ENCODE measurements at regions of chr11 and their contacts with region 1.

Region 1: GRCh38 chr11:102940714-102941588 is 14.6 kb downstream of the MMP13 start:
- DNase-seq: peak; percentile 29
- H3K4me3 ChIP-seq: no peak overlapping the region
- H3K27ac ChIP-seq: no peak overlapping the region
- H3K27me3 ChIP-seq: no peaks in the 10 kb centered on the region
- CTCF ChIP-seq: peak; percentile 78

Region 2: DNA sequence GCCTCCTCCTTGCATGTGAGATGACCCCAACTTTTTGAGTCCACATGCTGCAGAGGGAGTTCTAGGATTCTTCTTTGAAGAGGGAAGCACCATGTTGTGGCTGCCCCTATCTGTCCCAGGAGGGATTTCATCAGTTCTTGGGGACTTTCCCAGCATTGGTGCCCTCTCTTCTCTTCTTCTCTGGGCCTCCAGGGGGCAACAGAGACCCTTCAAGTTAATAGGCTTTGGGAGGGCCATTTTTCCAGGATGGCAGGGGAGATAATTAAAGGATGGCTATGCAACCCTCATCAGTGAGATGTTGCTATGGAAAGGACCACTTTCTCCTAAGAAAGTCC is 146.5 kb before region 1 on chr11:
- CTCF ChIA-PET with region 1: interaction called, 12 read pairs
- POLR2A ChIA-PET with region 1: no interaction called
- DNase-seq: no peak
- H3K4me3 ChIP-seq: no peak overlapping the region
- H3K27ac ChIP-seq: no peak overlapping the region
- H3K27me3 ChIP-seq: no peaks in the 10 kb centered on the region
- CTCF ChIP-seq: peak; percentile 58

Region 3: DNA sequence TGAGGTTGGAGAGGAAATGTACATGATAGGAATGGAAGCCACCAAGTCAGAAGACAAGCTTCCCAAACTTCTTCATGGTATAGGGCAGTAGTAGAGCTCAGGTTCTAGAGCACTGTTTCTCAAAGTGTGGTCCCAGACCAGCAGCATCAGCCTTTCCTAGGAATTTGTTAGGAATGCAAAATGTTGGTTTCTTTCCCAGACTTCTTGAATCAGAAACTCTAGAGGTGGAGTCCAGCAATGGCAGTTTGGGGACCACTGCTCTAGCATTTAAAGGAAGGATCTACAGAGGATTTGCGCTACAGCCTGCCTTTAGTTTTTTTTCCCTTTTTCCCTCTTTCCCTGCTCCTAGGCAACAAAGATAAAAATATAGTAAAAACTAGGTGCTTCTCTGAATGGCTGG is 49.2 kb before region 1 on chr11:
- CTCF ChIA-PET with region 1: interaction called, 10 read pairs
- POLR2A ChIA-PET with region 1: no interaction called
- DNase-seq: no peak
- H3K4me3 ChIP-seq: no peak overlapping the region
- H3K27ac ChIP-seq: no peak overlapping the region
- H3K27me3 ChIP-seq: peaks cover 7% of the 10 kb centered on the region
- CTCF ChIP-seq: 0 out of 2 replicates have a peak, but pooled peaks have one; percentile 4

Region 4: GRCh38 chr11:102920118-102920684 is 20.8 kb before region 1 on chr11:
- CTCF ChIA-PET with region 1: interaction called, 62 read pairs
- POLR2A ChIA-PET with region 1: no interaction called
- DNase-seq: no peak
- H3K4me3 ChIP-seq: no peak overlapping the region
- H3K27ac ChIP-seq: no peak overlapping the region
- H3K27me3 ChIP-seq: no peaks in the 10 kb centered on the region
- CTCF ChIP-seq: no peak

Region 5: GRCh38 chr11:102966011-102966410 is 25.1 kb after region 1 on chr11:
- CTCF ChIA-PET with region 1: interaction called, 12 read pairs
- POLR2A ChIA-PET with region 1: no interaction called
- DNase-seq: no peak
- H3K4me3 ChIP-seq: no peak overlapping the region
- H3K27ac ChIP-seq: no peak overlapping the region
- H3K27me3 ChIP-seq: no peaks in the 10 kb centered on the region
- CTCF ChIP-seq: no peak

Region 6: DNA sequence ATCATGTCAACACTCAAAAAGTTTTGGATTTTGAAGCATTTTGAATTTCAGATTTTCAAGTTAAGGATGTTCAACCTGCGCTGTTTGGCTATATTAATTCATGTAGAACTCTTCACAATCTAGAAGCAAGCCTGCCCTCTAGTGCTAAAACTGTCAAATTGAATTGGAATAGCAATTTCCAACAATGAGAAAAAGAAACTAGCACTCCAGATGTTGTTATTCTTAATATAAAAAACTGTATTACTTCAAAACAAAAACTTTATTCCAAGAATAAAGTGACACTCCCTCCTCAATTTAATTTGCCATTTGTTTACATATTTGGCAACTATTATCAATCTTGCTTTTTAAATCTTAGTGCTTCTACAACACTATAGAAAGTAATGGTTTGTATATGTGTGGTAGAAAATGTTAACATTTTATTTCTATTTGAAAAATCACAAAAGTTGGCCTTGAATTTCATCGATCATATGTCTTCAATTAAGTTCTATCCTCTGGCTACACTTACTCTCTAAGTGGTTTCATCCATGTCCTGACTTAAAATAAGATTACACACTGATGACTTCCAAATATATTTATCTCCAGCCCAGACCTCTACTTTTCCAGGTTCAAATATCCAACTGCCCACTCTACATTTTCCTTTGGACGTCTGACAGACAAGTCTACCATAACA is 114.4 kb after region 1 on chr11:
- CTCF ChIA-PET with region 1: interaction called, 12 read pairs
- POLR2A ChIA-PET with region 1: no interaction called
- DNase-seq: peak; percentile 16
- H3K4me3 ChIP-seq: no peak overlapping the region
- H3K27ac ChIP-seq: no peak overlapping the region
- H3K27me3 ChIP-seq: no peaks in the 10 kb centered on the region
- CTCF ChIP-seq: peak; percentile 67

Region 7: DNA sequence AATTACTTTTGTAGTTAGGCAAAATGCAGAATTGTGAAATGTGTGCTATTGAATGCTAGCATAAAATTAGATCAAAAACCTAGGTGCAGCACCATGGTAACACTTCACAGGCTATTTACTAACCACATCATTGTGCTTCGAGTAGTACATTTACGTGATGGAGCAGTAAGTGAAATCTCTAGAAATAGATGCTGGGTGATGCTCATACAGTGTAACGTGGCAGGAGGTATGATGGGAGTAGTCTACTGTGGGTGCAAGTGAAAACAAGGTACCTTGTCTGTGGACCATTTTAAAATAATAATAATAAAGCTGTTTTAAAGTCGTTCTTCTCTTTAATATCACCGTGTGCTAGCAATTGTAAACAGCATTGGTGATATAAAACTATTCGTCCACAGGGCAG is 300.6 kb after region 1 on chr11:
- CTCF ChIA-PET with region 1: no interaction called
- POLR2A ChIA-PET with region 1: no interaction called
- DNase-seq: no peak
- H3K4me3 ChIP-seq: no peak overlapping the region
- H3K27ac ChIP-seq: no peak overlapping the region
- H3K27me3 ChIP-seq: no peaks in the 10 kb centered on the region
- CTCF ChIP-seq: no peak